GM10248 (cell line): ENCODE measurements at regions of chr19 and their contacts with region 1.

Region 1: DNA sequence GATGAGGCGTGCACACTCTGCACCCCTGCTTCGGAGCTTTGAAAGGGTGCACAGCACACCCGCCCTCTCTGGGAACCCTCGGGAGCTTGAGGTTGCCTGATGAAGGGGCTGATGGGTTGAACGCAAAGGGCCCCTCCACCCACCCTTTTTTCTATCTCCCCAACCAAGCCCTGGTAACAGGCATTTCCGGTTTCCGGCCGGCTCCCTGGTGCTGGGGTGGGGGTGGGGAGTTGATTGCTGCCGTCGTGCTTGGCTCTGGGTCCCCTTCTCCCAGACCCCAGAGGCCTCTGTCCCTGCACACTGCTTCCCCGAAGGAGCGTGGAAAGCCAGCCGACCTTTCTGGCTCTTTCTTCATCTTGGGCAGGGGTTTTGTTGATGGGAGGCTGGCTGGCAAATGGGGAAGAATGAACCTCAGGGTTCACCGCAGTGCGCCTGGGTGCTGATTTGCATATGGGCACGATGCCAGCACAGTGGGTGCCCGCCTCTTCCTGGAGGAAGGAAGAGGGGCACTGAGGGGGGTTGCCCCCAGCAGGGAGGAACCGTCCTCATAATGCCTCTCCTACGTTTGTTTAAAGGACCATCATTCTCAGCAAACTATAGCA is 29.1 kb downstream of the VAV1 start:
- DNase-seq: peak; percentile 78
- CTCF ChIP-seq: no peak

Region 2: GRCh38 chr19:6767357-6768235 is 34.0 kb before region 1 on chr19 and contains the start of gene SH2D3A:
- CTCF ChIA-PET with region 1: interaction called, 12 read pairs
- POLR2A ChIA-PET with region 1: interaction called, 6 read pairs
- DNase-seq: peak; percentile 95
- CTCF ChIP-seq: peak; percentile 3

Region 3: DNA sequence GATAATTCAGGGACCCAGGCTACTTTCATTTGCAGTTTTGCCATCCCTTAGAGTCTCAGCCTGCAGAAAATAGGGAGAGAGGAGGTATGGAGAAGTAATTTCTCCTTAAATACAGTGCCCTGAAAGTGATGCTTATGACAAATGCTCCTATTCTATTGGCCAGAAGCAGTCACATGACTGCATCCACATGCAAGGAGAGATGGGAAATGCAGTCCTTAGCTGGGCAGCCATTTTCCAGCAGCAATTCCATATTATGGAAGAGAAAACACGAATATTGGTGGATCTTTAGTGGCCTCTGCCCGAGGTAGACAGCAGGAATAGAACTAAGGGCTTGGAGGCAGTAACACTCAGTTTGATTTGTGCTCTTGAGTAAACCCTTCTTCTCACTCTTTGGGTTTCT is 10.3 kb after region 1 on chr19:
- CTCF ChIA-PET with region 1: interaction called, 21 read pairs
- POLR2A ChIA-PET with region 1: interaction called, 3 read pairs
- DNase-seq: no peak
- CTCF ChIP-seq: no peak

Region 4: DNA sequence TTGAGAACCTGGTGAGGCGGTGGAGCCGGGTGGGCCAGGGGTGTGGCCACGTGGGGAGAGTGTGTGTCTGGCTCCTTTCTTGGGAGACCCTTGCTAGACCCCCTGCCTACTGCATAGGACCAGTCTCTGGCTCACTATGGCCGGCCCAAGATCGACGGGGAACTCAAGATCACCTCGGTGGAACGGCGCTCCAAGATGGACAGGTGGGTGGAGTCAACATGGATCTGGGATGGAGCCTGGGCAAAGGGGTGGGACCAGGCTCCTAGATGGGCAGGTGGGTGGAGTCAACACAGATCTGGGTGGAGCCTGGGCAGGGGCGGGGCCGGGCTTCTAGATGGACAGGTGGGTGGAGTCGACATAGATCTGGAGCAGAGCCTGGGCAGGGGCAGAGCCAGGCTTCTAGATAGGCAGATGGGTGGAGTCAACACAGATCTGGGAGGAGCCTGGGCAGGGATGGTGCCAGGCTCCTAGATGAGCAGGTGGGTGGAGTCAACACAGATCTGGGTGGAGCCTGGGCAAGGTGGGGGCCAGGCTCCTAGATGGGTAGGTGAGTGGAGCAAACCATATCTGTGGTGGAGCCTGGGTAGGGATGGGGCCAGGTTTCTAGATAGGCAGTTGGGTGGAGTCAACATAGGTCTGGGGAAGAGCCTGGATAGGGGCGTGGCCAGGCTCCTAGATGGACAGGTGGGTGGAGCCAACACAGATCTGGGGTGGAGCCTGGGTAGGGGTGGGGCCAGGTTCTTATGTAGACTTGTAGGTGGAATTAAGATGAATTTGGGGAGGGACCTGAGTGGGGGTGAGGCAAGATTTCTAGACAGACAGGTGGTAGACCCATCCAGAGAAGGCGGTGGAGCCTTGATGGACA is 27.3 kb after region 1 on chr19:
- CTCF ChIA-PET with region 1: no interaction called
- POLR2A ChIA-PET with region 1: no interaction called
- DNase-seq: peak; percentile 58
- CTCF ChIP-seq: no peak

Region 5: GRCh38 chr19:7004313-7004931 is 202.8 kb after region 1 on chr19:
- CTCF ChIA-PET with region 1: no interaction called
- POLR2A ChIA-PET with region 1: no interaction called
- DNase-seq: no peak
- CTCF ChIP-seq: peak; percentile 46